ENCODE measurements at regions of chr12 and their contacts with region 1.

Region 1: DNA sequence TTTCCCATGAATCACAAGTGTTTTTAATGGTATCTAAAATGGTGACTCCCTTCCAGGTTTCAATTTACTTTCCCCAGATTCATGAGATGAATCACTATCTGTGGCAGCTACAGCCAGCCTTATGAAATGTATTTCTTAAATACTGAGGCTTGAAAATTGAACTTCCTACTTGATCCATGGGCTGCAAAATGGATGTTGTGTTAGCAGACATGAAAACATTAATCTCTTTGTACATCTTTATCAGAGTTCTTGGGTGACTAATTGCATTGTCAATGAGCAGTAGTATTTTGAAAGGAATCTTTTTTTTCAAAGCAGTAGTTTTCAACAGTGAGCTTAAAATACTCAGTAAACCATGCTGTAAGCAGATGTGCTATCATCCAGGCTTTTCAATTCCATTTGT is 250.8 kb downstream of the SLC6A15 start:
- DNase-seq: no peak
- H3K4me3 ChIP-seq: no peak overlapping the region
- H3K27ac ChIP-seq: no peak overlapping the region
- H3K4me1 ChIP-seq: no peaks in the 10 kb centered on the region
- H3K27me3 ChIP-seq: no peaks in the 10 kb centered on the region
- CTCF ChIP-seq: no peak
- POLR2A ChIP-seq: no peak

Region 2: GRCh38 chr12:84738481-84738972 is 76.7 kb after region 1 on chr12:
- CTCF ChIA-PET with region 1: no interaction called
- POLR2A ChIA-PET with region 1: no interaction called
- dilution Hi-C with region 1: no loop called
- intact Hi-C with region 1: loop called (anchors 2 kb)
- DNase-seq: peak; percentile 2
- H3K4me3 ChIP-seq: no peak overlapping the region
- H3K27ac ChIP-seq: no peak overlapping the region
- H3K4me1 ChIP-seq: no peaks in the 10 kb centered on the region
- H3K27me3 ChIP-seq: no peaks in the 10 kb centered on the region
- CTCF ChIP-seq: no peak
- POLR2A ChIP-seq: no peak